ENCODE measurements at regions of chr9 and their contacts with region 1.

Region 1: DNA sequence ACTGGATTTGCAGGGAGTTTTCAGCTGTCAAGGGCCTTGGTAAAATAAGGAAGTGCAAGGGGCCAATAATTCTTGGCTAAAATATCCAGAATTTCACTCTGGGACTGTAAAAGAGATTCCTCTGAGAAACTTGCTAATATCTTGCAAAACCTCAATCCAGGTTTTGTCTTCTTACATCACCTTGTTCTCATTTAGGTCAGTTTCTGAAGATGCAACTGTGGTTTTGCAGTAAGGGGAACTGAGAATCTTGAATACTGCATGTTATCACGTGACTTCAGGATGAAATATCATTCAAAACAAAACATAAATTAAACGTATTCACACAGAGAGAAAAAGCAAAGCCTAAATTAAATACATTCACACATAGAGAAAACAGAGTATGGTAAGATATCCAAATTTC is 35.0 kb upstream of the RIC1 start:
- DNase-seq: no peak
- ATAC-seq: no peak
- H3K4me3 ChIP-seq: no peak overlapping the region
- H3K27ac ChIP-seq: no peak overlapping the region
- H3K4me1 ChIP-seq: no peaks in the 10 kb centered on the region
- H3K27me3 ChIP-seq: no peaks in the 10 kb centered on the region
- CTCF ChIP-seq: no peak
- POLR2A ChIP-seq: no peak
- RAD21 ChIP-seq: no peak

Region 2: DNA sequence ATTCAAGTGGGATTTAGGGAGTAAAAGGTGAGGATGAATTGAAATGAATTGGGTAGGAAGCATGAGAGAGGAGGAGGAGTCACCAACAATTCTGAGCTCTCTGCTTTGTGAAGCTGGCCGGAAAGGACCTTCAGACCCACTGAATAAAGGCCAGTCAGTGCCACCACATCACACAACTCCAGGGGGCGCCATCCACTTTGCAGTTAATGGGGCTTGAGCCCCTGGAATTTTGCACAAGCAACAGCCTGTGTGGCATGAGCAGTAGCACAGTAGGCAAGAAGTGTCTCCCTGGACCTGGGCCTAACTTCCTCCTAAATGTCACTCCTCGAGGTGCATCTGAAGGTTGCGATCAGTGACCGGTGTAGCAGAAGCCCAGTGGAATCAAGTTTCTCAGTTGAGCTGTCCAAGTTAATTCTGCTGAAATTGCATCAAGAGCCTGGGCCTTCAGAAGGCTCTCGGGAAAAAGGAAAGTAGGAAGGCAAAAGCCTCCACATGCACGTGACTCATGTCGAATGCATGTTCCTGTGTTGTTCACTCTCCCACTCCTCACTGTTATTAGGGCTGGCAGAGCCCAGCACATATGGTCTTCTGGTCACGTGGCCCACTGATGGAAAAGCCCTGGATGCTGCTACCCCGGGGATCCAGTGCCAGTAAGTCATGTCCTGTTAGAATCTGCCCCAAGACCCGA is 1266.3 kb before region 1 on chr9:
- CTCF ChIA-PET with region 1: no interaction called
- POLR2A ChIA-PET with region 1: no interaction called
- RAD21 ChIA-PET with region 1: no interaction called
- intact Hi-C with region 1: no loop called
- DNase-seq: no peak
- ATAC-seq: peak; percentile 60
- H3K4me3 ChIP-seq: no peak overlapping the region
- H3K27ac ChIP-seq: no peak overlapping the region
- H3K4me1 ChIP-seq: peaks cover 0 to 4% of the 10 kb centered on the region in 2 experiments; a peak in 1 of 4 replicates
- H3K27me3 ChIP-seq: no peaks in the 10 kb centered on the region
- CTCF ChIP-seq: peak in 2 of 3 experiments; percentile 29 to 44; a peak in 3 of 6 replicates
- POLR2A ChIP-seq: no peak
- RAD21 ChIP-seq: peak; percentile 24

Region 3: GRCh38 chr9:4662108-4662988 is 931.6 kb before region 1 on chr9 and contains the start of gene PLPP6:
- CTCF ChIA-PET with region 1: no interaction called
- POLR2A ChIA-PET with region 1: no interaction called
- RAD21 ChIA-PET with region 1: no interaction called
- intact Hi-C with region 1: loop called (anchors 10 kb)
- DNase-seq: peak; percentile 80
- ATAC-seq: peak; percentile 94
- H3K4me3 ChIP-seq: peak within 1 kb of the TSS; percentile 75 to 77
- H3K27ac ChIP-seq: peak within 1 kb of the TSS; percentile 70
- H3K4me1 ChIP-seq: peaks cover 17 to 28% of the 10 kb centered on the region in 2 experiments
- H3K27me3 ChIP-seq: no peaks in the 10 kb centered on the region
- CTCF ChIP-seq: peak; percentile 33 to 50 (median 37); a peak in 5 of 6 replicates
- POLR2A ChIP-seq: no peak
- RAD21 ChIP-seq: peak; percentile 63
- total RNA-seq, gene PLPP6: 5.0 TPM

Region 4: DNA sequence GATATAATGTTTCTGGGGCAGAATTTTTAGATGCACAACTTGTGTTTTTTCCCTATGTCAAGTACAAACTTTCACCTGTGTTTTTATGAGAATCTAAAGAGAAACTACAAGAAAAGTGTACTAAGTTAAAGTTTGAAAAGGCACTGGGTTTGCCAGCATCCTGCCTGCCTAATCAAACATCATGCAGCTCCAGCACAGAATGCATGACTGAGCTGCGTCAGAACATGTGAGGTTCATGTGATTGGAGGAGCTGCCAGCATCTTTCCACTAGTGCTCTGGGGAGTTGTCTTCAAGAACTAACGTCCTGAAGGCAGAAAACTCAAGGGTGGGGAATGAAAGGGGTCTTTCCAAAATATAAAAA is 11.1 kb before region 1 on chr9:
- CTCF ChIA-PET with region 1: no interaction called
- POLR2A ChIA-PET with region 1: no interaction called
- RAD21 ChIA-PET with region 1: no interaction called
- intact Hi-C with region 1: no loop called
- DNase-seq: no peak
- ATAC-seq: no peak
- H3K4me3 ChIP-seq: no peak overlapping the region
- H3K27ac ChIP-seq: no peak overlapping the region
- H3K4me1 ChIP-seq: no peaks in the 10 kb centered on the region
- H3K27me3 ChIP-seq: no peaks in the 10 kb centered on the region
- CTCF ChIP-seq: no peak
- POLR2A ChIP-seq: no peak
- RAD21 ChIP-seq: no peak

Region 5: DNA sequence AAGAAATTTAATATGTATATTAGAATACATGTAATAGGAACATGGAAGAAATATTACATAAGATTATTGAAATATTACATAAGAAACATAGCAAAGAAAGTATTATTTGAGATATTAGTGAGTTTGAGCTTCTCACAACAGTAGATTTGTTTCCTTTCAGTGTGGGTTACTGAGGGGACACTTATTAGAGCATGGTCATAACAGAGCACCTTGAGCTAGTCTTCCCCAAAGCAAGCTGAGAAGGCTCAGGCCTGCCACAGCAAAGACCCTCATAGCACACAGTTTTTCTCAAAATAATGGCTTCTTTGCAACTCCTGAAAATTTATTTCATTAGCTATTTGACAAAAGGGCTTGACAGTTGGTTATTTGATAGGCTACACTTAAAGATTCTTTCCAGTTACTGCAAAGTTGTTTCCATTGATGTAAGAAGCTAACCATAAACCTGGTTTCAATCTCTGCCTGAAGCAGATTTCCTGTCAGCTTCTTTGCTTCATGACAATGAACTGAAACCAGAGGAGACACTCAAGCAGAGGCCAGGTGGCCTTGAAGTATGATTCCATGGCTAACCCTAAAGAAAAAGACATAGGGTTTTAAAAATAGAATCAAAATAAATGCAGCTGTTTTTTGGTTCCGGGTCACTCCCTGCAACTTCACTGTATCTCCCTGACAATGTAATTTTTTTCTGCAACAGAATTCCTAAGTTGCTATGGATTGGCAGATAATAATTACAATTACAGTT is 170.4 kb after region 1 on chr9:
- CTCF ChIA-PET with region 1: no interaction called
- POLR2A ChIA-PET with region 1: no interaction called
- RAD21 ChIA-PET with region 1: no interaction called
- intact Hi-C with region 1: no loop called
- DNase-seq: no peak
- ATAC-seq: no peak
- H3K4me3 ChIP-seq: no peak overlapping the region
- H3K27ac ChIP-seq: no peak overlapping the region
- H3K4me1 ChIP-seq: no peaks in the 10 kb centered on the region
- H3K27me3 ChIP-seq: no peaks in the 10 kb centered on the region
- CTCF ChIP-seq: no peak
- POLR2A ChIP-seq: no peak
- RAD21 ChIP-seq: no peak

Measured in HCT116 (cell line).